Mammary epithelial cell (primary cell): ENCODE measurements at regions of chr2 and their contacts with region 1.

Region 1: DNA sequence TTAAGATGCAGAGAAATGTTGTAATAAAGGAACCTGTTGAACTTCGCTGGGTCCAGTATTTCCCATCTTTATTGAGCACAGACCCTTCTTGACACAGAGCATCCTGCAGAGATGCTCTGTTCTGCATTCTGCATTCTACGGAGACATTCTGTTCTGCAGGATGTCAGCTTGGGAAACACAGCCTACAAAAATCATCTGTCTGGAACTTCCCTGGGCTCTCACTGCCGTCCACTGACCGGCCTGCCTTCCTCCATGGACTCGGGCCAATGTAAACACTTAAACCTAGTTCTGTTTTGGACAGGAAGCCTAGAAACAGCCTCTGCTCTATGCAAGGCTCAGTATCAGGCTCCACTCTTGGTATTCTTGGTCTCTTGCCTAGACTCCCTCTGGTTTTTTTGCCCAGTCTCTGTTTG is 90.0 kb upstream of the PPP1CB start:
- DNase-seq: peak; percentile 78
- H3K4me3 ChIP-seq: no peak overlapping the region
- H3K27ac ChIP-seq: no peak overlapping the region
- H3K4me1 ChIP-seq: peaks cover 42% of the 10 kb centered on the region
- H3K27me3 ChIP-seq: no peaks in the 10 kb centered on the region
- CTCF ChIP-seq: no peak

Region 2: DNA sequence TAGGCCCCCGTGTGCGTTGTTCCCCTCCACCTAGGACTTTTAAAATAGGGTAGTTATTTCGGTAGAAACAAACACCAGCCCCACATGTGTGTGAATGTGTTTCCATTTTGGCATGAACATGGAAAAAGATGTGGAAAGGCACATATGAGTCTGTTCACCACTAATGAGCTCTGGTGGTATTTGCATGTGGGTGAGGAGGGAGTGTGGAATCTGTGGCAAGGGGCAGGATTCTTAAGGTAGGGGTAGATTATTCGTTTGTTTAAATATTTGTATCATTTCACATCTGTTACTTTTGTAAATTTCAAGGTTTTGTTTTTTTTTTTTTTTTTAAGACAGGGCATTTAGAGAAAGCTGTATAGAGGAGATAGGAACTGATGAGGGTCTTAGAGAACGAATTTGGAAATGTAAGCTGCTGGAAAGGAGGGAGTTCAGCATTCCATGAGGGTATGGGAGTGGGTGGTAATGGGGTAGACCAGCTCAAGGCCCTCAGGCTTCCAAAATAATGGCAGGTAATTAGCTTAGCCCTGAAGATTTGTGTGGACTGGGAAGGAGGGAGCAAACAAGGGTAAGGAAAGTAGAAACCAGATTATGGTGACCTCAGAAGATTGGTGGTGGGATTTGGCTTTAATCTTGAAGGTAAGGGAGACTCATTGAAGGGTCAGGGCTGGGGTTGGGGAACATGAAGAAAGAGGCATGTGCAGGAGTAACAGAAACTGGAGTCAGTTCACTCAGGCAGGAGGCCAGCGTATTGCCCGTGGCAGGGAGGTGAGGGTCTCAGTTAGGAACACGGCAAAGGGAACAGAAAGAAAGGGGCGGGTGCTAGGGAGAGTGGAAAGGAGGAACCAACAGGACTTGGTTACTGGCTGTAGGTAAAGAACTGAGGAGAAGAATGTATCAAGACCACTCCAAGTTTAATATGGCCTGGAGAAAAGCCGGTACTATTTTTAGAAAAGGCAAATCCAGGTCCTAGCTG is 42.1 kb before region 1 on chr2:
- CTCF ChIA-PET with region 1: no interaction called
- dilution Hi-C with region 1: loop called (anchors 5 kb)
- in situ Hi-C with region 1: no loop called
- intact Hi-C with region 1: loop called (anchors 5 kb)
- DNase-seq: no peak
- H3K4me3 ChIP-seq: no peak overlapping the region
- H3K27ac ChIP-seq: no peak overlapping the region
- H3K4me1 ChIP-seq: peaks cover 28% of the 10 kb centered on the region
- H3K27me3 ChIP-seq: no peaks in the 10 kb centered on the region
- CTCF ChIP-seq: no peak

Region 3: DNA sequence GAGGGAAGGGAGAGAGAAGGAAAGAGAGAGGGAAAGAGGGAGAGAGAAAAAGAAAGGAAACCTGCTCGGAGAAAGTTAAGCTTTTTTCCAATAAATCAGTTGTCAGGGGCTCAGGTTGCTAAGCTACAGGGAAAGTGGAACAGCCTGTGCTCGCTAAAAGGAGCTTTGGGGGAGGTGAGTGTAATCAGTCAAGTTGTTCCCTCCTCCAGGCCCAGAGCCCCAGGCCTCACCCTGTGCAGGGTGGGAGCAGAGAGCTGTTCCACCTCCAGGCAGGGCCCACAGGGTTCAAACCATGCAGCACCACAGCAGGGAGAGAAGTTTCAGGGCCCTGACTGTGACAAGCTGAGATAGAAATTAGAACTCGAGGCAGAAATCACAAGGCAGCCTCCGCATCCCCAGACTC is 33.7 kb after region 1 on chr2:
- CTCF ChIA-PET with region 1: no interaction called
- dilution Hi-C with region 1: no loop called
- in situ Hi-C with region 1: no loop called
- intact Hi-C with region 1: no loop called
- DNase-seq: no peak
- H3K4me3 ChIP-seq: no peak overlapping the region
- H3K27ac ChIP-seq: no peak overlapping the region
- H3K4me1 ChIP-seq: peaks cover 6% of the 10 kb centered on the region
- H3K27me3 ChIP-seq: no peaks in the 10 kb centered on the region
- CTCF ChIP-seq: no peak